CD8-positive, alpha-beta memory T cell (primary cell): ENCODE measurements at regions of chr15 and their contacts with region 1.

Region 1: DNA sequence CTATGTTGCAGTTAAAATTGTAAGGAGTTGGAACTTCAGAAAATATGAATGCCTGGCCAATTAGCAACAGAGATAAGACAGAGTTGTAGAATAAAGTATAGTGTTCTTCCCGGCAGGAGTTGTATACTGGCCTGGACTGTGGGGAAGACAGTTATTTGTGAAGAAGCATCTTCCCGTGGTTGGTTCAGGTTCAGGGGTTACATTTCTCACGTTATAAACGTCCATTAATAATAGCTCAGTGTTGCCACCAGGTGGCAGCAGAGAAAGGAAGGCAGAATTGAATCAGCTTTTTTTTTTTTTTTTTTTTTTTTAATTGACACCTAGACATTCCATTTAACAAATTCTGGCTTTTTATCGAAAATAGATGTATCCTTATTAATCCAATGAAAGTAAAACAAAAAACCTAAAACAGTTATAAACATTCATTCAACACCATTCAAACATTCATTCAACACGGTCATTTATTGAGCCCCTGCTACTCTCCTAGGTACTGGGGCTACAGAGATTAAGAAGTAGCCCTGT is 66.4 kb upstream of the NR2E3 start:
- DNase-seq: peak; percentile 29 to 66 (median 39)
- H3K4me3 ChIP-seq: no peak overlapping the region
- H3K4me3 Mint-ChIP-seq: no peak overlapping the region
- H3K27ac ChIP-seq: no peak overlapping the region
- H3K27ac Mint-ChIP-seq: no peak overlapping the region
- H3K4me1 ChIP-seq: no peaks in the 10 kb centered on the region
- H3K4me1 Mint-ChIP-seq: peaks cover 0 to 5% (median 3%) of the 10 kb centered on the region in 3 donors
- H3K27me3 ChIP-seq: no peaks in the 10 kb centered on the region
- H3K27me3 Mint-ChIP-seq: peaks cover 4% of the 10 kb centered on the region in 2 donors

Region 2: DNA sequence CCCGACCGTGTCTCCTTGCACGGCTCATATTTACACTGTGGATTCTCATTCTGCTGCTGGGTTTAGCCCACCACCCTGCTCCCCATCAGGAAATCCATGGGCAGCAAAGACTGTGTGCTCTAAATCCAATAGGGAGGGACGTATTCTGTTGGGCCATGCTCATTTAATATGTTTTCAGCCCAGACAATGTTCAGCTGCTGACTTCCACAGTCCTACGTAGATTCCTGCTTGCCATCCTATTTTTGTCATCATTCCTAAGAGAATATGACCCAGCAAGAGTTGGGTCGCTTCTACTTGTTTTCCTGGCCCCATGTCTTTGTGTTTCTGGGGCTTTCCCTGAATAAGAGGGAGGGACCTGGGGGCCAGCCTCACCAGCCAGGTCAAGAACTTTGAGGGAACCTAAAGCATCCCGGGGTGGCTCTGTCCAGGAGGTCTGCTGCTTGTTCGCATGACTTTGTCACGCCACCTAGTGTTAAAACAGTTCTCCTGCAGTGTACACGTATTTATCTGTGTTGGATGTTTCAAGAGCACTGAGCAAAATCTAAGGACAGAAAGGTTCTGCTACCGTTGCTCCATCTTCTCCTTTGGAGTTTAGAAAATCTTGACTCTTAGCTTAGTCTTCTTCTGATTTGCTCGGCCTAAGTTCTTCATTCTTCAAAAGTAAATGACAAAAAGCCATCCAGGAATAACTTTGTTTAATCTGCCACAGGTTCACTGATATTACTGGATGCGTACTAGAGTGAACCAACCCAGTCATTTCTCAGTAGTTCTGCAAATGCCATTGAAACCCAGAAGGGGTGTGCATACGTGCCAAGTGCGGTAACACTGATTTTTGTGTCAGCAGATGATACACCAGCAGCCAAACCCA is 13.4 kb before region 1 on chr15:
- CTCF ChIA-PET with region 1: interaction called, 14 read pairs
- POLR2A ChIA-PET with region 1: no interaction called
- DNase-seq: peak in 2 of 5 donors; percentile 3 to 6
- H3K4me3 ChIP-seq: no peak overlapping the region
- H3K4me3 Mint-ChIP-seq: no peak overlapping the region
- H3K27ac ChIP-seq: no peak overlapping the region
- H3K27ac Mint-ChIP-seq: no peak overlapping the region
- H3K4me1 ChIP-seq: no peaks in the 10 kb centered on the region
- H3K4me1 Mint-ChIP-seq: no peaks in the 10 kb centered on the region
- H3K27me3 ChIP-seq: no peaks in the 10 kb centered on the region
- H3K27me3 Mint-ChIP-seq: peaks cover 9 to 21% of the 10 kb centered on the region in 2 donors